Heart right ventricle (tissue), 16 donors: ENCODE measurements at regions of chr20 and their contacts with region 1.

Region 1: DNA sequence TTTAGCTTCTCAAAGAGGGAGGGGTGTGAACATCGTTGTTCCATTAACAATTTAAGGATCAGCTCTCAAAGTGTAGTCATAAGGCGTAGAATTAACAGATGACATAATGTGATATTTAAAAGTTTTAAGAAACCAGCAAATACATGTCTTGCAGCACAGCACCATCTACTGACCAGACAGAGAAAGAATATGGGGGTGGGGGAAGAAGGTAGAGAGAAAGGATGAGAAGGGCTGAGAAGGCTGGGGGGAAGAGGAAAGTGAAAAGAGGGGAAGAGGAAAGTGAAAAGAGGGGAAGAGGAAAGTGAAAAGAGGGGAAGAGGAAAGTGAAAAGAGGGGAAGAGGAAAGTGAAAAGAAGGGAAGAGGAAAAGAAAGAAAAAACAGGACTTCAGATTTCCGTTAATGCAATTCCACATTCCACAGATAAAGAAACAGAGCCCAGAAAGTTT is 80.9 kb downstream of the HAO1 start:
- DNase-seq: peak in 1 of 2 donors; percentile 46
- ATAC-seq: peak in 7 of 8 donors; percentile 51 to 88 (median 67)
- H3K4me3 ChIP-seq: no peak overlapping the region
- H3K27ac ChIP-seq: no peak overlapping the region
- H3K4me1 ChIP-seq: peaks cover 0 to 16% (median 4%) of the 10 kb centered on the region in 9 donors
- H3K27me3 ChIP-seq: no peaks in the 10 kb centered on the region
- CTCF ChIP-seq: peak; percentile 19 to 71 (median 54)

Region 2: GRCh38 chr20:6142348-6142993 is 1716.9 kb before region 1 on chr20:
- intact Hi-C with region 1: loop called in 1 of 10 experiments (anchors 5 kb)
- DNase-seq: peak in 1 of 2 donors; percentile 49
- ATAC-seq: peak in 5 of 8 donors; percentile 61 to 75 (median 64)
- H3K4me3 ChIP-seq: no peak overlapping the region
- H3K27ac ChIP-seq: no peak overlapping the region
- H3K4me1 ChIP-seq: no peaks in the 10 kb centered on the region
- H3K27me3 ChIP-seq: peaks cover 0 to 18% (median 5%) of the 10 kb centered on the region in 7 donors
- CTCF ChIP-seq: peak; percentile 58 to 91 (median 84)

Region 3: GRCh38 chr20:6828794-6829423 is 1030.5 kb before region 1 on chr20:
- intact Hi-C with region 1: loop called in 8 of 10 experiments (anchors 2 to 10 kb)
- DNase-seq: peak; percentile 15 to 65
- ATAC-seq: peak in 7 of 8 donors; percentile 43 to 85 (median 75)
- H3K4me3 ChIP-seq: no peak overlapping the region
- H3K27ac ChIP-seq: no peak overlapping the region
- H3K4me1 ChIP-seq: no peaks in the 10 kb centered on the region
- H3K27me3 ChIP-seq: no peaks in the 10 kb centered on the region
- CTCF ChIP-seq: peak; percentile 57 to 83 (median 72)

Region 4: DNA sequence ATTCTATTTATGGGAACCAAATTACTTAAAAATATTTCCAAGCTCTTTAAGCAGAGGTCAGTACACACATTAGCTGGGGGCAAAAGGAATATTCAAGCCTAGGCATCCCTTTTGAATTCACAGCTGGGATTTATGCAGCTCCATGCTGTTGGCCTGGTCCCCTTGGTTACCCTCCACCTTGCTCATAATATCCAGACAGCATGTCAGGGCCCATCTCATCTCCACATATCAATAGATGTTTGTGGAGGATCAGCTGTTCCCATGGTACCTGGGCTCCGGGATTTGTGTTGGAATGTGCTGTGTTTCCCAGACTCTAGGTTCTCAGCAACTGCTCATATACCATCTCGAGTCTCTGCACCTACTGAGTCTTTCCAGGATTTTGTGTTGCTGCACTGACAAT is 557.1 kb before region 1 on chr20:
- intact Hi-C with region 1: loop called in 1 of 10 experiments (anchors 10 kb)
- DNase-seq: no peak
- ATAC-seq: no peak
- H3K4me3 ChIP-seq: no peak overlapping the region
- H3K27ac ChIP-seq: no peak overlapping the region
- H3K4me1 ChIP-seq: no peaks in the 10 kb centered on the region
- H3K27me3 ChIP-seq: peaks cover 0 to 8% (median 0%) of the 10 kb centered on the region in 7 donors
- CTCF ChIP-seq: no peak

Region 5: DNA sequence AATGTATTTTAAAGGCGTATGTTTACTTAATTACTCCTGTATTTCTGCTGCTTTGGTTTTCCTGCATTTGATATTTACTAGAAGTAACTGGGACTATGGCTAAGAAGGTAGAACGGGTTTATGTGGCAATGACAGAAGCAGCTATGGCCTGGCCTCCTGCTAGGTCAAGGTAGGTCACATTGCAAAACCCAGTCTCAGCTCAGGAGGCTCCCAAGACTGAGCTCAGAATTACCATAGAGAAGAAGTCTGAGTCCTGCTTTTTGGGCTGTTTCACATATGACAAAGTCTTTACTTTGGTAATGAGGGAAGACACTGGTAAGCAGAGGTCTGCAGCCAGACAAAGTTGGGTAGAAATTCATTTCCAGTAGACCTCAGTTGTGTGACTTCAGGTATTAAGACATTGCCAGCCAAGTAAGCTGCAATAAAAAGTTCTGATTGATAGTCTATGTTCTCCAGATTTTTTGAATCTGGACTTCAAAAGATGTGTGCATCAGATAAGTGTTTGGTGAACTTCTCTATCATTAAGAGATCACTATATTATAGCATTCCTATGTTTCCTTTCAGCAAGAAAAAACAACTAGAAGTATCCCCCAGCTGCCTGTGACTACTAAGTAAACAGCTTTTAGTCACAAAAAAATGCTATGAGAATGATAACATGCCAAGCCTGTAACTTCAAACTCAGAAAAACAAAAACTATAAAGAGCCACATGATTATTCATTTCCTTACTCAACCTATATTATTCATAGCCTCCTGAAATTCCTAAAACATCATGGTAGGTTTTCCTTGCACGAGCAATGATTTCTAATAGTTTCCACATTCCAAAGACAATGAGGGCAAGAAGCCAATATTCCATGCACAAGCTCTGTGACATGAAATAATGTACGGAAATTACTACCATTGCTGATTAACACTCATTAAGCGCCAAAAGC is 231.4 kb before region 1 on chr20:
- intact Hi-C with region 1: loop called in 1 of 10 experiments (anchors 5 kb)
- DNase-seq: no peak
- ATAC-seq: peak in 1 of 8 donors; percentile 53
- H3K4me3 ChIP-seq: no peak overlapping the region
- H3K27ac ChIP-seq: no peak overlapping the region
- H3K4me1 ChIP-seq: peaks cover 0 to 24% (median 0%) of the 10 kb centered on the region in 9 donors
- H3K27me3 ChIP-seq: no peaks in the 10 kb centered on the region
- CTCF ChIP-seq: no peak

Region 6: GRCh38 chr20:9093218-9093957 is 1234.0 kb after region 1 on chr20:
- intact Hi-C with region 1: no loop called
- DNase-seq: peak in 1 of 2 donors; percentile 36
- ATAC-seq: peak; percentile 33 to 88 (median 80)
- H3K4me3 ChIP-seq: peak overlapping the region in 3 of 10 donors; percentile 10 to 22 (median 17)
- H3K27ac ChIP-seq: peak overlapping the region; percentile 8 to 88 (median 65)
- H3K4me1 ChIP-seq: peaks cover 0 to 70% (median 37%) of the 10 kb centered on the region in 9 donors
- H3K27me3 ChIP-seq: no peaks in the 10 kb centered on the region
- CTCF ChIP-seq: peak in 1 of 9 donors; percentile 8